Activated T-helper 2 cell treated with anti-CD3 and anti-CD28 coated beads, Interferon-gamma antibody, Interleukin-2, Interleukin-4, amounts not matched to agents 10 μg/mL and 5 μg/mL and 100 μg/mL, durations not matched to agents 14 hours and 24 hours and 36 hours (primary cell): ENCODE measurements at regions of chr14 and their contacts with region 1.

Region 1: DNA sequence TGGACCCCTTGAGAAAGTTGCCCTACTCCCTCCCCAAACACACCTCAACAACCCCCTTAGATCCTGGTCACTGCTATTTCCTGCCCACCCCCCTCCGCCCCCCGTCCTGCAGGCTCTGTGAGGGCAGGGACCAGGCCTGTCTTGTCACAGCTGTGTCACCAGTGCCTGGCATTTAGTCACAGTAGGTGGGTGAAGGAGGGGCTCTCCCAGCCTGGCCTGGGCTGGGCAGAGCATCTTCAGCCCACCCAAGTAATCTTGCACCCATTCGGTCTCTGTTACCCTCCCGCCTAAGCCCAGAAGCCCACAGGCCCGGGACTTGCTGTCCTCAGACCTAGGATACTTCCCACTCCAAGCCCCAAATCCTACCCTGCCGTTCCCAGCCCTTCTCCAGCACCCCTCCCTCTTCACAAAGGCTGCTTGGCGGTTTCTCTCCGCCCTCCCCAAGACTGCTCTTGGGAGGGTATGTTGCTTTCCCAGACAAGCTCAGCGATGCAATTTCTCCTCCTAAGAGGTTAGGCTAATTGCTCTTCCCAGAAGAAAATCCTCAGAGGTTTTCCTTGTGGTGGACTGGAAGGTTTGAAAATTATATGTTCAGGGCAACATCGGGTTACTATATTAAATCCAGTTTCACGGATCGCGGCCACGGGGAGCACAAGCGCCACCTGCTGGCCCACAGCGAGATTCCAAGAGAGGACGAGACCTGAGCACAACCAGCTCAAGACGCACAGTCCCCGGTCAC is 50.8 kb upstream of the ZFP36L1 start:
- DNase-seq: peak; percentile 59
- H3K4me3 Mint-ChIP-seq: no peak overlapping the region
- H3K27ac Mint-ChIP-seq: no peak overlapping the region
- H3K4me1 Mint-ChIP-seq: peaks cover 21% of the 10 kb centered on the region
- H3K27me3 Mint-ChIP-seq: peaks cover 8% of the 10 kb centered on the region

Region 2: DNA sequence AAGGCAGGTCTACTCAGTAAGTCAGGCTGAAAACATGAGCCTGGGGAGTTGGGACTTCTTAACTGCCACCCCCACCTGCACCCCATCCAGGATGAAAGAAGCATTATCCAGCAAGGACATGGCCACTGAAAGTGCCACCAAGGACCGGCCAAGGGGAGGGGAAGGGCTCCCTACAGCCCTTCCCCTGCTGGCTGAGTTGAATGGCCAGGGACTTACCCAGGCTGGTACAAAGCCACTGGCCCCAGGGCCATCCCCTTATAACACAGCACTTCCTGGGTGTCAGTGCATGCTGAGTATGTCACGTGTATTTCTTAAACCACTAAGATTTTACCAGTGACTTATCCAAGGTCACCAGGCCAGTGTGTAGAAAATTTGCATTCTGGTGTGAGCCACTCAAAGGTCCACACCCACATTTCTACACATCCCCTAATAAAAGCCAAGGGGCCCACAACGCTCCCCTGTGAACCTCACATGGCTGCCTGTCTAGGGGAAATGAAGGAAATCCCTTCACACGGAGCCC is 21.4 kb before region 1 on chr14:
- intact Hi-C with region 1: loop called (anchors 2 kb)
- DNase-seq: no peak
- H3K4me3 Mint-ChIP-seq: no peak overlapping the region
- H3K27ac Mint-ChIP-seq: peak overlapping the region; percentile 62
- H3K4me1 Mint-ChIP-seq: peaks cover 41% of the 10 kb centered on the region
- H3K27me3 Mint-ChIP-seq: no peaks in the 10 kb centered on the region

Region 3: GRCh38 chr14:68854421-68854820 is 10.8 kb after region 1 on chr14:
- intact Hi-C with region 1: no loop called
- DNase-seq: no peak
- H3K4me3 Mint-ChIP-seq: no peak overlapping the region
- H3K27ac Mint-ChIP-seq: no peak overlapping the region
- H3K4me1 Mint-ChIP-seq: no peaks in the 10 kb centered on the region
- H3K27me3 Mint-ChIP-seq: no peaks in the 10 kb centered on the region